ENCODE measurements at regions of chr1 and their contacts with region 1.

Region 1: DNA sequence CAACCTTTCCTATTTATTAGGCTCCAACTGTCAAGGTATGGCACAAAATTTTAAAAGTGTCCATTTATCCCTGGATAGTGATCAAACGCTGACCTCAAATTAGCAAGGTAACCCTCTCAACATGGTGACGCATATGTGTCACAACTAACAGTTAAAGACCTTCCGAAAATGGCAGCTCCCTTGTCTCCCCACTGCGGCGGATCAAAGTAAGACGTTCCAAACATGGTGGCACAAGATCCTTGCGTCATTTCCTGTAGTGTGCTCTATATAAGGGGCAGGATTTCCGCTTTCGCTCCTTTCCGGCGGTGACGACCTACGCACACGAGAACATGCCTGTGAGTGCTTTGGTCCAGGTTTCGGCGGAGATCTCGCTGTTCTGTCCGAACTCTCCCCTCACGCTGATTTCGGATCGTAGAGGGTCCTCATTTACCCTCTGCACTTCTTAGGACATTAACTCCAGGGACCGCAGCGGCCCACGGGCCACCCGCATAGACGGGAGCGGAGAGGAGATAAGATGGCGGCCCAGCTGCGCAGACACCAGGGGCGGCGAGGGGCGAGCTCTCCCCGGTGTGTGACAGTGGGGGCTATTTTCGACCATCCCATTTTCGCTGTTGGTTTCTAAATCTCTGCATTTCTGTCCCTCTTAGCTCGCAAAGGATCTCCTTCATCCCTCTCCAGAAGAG is at the start of gene RPS27:
- DNase-seq: peak; percentile 95
- CTCF ChIP-seq: no peak

Region 2: GRCh38 chr1:153465811-153466636 is 524.6 kb before region 1 on chr1:
- CTCF ChIA-PET with region 1: no interaction called
- POLR2A ChIA-PET with region 1: no interaction called
- DNase-seq: peak; percentile 74
- CTCF ChIP-seq: peak; percentile 64

Region 3: GRCh38 chr1:153796791-153797659 is 193.6 kb before region 1 on chr1:
- CTCF ChIA-PET with region 1: interaction called, 33 read pairs
- POLR2A ChIA-PET with region 1: no interaction called
- DNase-seq: peak; percentile 86
- CTCF ChIP-seq: peak; percentile 78

Region 4: DNA sequence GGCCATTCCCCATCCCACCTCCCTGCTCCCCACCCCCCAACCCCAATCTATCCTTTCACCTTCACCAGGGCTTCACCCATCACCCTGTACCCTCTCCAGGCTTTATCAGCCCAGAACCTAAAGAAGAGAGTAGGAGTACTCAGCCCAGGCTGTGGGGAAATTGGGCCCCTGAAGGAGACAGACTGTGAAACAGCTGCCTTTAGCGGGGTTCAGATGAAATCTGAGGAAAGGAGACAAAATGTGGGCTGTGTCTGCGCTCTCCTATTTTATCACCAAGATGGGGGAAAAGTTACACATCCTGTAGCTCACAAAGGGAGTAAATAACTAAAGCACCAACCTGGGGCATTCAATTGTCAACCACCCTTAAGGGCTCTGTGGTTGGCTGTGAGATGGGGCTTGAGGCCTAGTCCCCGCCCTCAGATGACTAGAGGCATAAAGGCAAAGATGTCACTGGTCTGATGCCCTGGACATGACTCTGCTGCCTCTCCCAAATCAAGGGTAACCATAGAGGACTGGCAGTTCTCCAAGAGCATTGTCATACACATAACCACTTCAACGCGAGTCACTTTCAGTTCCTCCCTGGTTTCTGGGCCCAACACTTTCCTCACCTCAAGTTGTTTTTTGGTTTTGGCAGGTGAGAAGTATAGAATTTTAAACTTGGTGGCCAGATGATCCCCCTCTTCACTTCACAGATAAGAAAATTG is 185.4 kb before region 1 on chr1:
- CTCF ChIA-PET with region 1: interaction called, 16 read pairs
- POLR2A ChIA-PET with region 1: interaction called, 3 read pairs
- DNase-seq: peak; percentile 89
- CTCF ChIP-seq: no peak

Region 5: DNA sequence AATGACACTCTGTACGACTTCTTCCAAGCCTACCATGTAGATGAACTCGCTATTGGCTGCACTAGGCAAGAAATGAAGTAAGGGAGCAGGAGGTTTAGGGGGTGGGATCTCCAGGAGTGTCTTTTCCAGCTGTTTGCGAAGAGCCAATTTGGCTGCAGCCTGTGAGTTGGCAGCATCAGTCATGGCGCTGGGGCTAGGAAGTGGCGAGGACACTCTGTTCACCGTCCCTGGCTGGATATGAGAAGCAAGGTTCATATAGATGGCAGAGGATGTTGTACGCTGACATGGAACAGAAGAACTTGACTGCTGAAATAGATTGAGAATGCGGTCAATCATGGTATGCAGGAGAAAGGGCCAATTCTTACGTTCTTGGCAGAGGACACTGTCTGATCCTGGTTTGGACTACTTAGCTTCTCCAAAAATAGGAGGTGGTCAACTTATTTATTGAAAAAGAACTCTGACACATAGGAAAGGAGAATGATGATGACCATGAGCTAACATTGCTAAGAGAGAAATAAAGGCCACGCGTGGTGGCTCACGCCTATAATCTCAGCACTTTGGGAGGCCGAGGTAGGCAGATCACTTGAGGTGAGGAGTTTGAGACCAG is 174.2 kb before region 1 on chr1:
- CTCF ChIA-PET with region 1: interaction called, 17 read pairs
- POLR2A ChIA-PET with region 1: no interaction called
- DNase-seq: no peak
- CTCF ChIP-seq: no peak

Region 6: GRCh38 chr1:153827168-153827964 is 163.2 kb before region 1 on chr1:
- CTCF ChIA-PET with region 1: interaction called, 17 read pairs
- POLR2A ChIA-PET with region 1: no interaction called
- DNase-seq: no peak
- CTCF ChIP-seq: no peak

Region 7: DNA sequence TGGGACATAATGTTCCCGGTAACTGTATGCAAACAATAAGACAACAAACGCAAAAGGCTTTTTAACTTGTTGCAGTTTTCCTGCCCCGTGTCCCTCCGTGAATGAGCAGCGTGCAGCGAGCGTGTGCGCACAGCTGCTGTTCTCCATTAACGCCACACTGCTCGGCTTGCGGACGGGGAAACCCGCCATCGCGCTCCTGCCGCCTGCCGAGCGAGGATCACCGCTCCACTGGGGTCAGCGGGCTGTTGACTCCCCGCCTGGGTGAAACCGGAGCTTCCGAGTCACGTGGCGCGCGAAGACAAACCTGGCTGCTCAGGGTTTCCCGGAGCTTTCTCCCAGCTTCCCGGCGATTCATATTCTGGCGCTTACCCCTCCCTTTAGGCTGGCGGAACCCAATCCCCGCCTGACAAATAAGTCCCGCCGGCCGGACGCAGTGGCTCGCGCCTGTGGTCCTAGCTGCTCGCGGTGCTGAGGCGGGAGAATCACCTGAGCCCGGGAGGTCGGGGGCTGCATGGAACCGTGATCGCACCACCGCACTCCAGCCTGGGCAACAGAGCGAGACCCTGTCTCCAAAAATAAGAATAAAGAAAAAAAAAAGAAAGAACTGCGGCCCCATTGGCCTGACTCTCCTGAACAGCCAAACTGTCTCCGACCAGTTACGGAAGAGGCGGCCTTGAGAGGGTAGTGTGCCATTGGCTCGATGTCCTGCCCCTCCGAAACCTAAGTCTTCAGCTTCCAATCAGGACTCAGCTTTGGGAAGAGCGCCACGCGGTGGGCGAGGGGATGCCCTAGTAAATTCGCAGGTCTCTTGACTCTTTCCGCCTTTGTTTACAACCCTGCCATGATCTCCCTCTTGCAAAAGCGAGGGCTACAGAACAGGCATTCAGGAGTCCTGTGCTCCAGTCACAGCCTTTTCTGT is 23.3 kb before region 1 on chr1 and contains the start of gene CREB3L4:
- CTCF ChIA-PET with region 1: interaction called, 16 read pairs
- POLR2A ChIA-PET with region 1: interaction called, 25 read pairs
- DNase-seq: peak; percentile 91
- CTCF ChIP-seq: peak; percentile 59

Region 8: DNA sequence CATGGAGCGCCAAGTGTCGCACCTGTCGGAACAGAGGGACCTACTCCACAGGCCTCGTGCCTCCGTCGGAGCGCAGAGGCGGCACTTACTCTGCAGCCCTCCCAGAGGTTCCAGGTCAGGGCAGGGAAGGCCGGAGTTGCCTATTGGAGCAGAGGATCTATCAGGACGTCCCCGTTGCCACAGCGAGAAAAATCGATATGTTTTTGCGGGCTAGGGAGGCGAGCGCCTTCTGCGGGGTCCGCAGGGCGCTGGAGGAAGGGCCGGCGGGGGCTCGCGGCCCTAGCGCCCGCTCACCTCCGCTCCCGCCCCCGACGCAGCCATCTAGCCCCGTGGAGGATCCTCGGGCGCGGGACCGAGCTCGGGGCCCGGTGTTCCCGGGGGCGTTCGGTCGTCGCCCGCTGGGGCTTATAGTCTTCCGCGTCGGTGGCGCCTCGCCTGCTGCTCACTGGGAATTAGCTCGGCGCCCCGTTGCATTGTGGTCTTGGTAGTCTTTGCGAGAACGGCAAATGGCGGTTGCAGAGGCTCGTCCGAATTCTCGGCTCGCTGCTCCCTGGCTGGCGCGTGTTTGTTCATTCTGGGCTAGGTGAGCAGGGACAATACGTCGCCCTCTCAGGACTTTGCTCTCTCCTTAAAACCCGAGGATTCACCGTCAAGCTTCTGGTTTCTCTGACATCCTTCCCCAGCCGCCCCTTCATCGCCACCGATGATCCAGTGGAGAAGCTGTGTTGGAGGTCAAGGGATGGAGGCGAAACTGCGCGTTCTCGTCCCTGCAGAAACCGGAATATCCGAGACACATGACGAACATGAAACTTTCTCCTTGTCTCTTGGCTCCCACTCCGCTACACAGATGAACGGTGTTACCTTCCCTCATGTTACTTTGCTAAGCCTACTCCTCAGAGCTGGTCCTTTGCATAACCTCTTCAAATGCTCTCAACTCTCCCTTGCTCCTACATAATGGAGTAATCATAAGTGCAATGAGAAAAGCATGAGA is 13.1 kb before region 1 on chr1 and contains the start of gene JTB:
- CTCF ChIA-PET with region 1: interaction called, 36 read pairs
- POLR2A ChIA-PET with region 1: interaction called, 23 read pairs
- DNase-seq: peak; percentile 91
- CTCF ChIP-seq: no peak

Region 9: GRCh38 chr1:154081386-154082126 is 90.9 kb after region 1 on chr1:
- CTCF ChIA-PET with region 1: no interaction called
- POLR2A ChIA-PET with region 1: no interaction called
- DNase-seq: no peak
- CTCF ChIP-seq: no peak

Region 10: GRCh38 chr1:154115180-154115579 is 124.6 kb after region 1 on chr1:
- CTCF ChIA-PET with region 1: no interaction called
- POLR2A ChIA-PET with region 1: no interaction called
- DNase-seq: no peak
- CTCF ChIP-seq: no peak

Measured in GM10248 (cell line).